ENCODE measurements at regions of chr20 and their contacts with region 1.

Region 1: DNA sequence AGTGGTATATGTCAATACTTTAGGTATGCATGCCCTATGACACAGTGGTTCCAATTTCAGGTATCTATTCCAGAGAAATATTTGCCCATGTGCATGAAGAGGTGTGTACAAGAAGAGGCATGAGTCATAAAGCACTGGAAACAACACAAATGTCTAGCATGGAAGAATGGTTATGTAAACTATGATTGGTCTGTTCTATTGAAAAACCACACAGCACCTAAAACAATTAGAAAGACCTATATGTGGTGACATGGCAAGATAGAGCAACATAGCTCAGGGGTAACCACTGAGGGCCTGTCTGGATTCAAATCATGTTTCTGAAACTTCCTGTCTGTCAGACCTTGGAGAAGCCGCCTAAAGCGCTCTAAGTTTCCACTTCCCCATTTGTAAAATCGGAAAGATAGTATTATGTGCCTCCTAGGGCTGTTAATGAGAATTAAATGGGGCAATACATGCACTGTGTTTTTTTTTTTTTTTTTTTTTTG is 76.0 kb upstream of the SHLD1 start:
- DNase-seq: peak; percentile 15
- H3K4me3 Mint-ChIP-seq: no peak overlapping the region
- H3K27ac Mint-ChIP-seq: no peak overlapping the region
- H3K4me1 Mint-ChIP-seq: peaks cover 7% of the 10 kb centered on the region
- H3K27me3 Mint-ChIP-seq: no peaks in the 10 kb centered on the region

Region 2: DNA sequence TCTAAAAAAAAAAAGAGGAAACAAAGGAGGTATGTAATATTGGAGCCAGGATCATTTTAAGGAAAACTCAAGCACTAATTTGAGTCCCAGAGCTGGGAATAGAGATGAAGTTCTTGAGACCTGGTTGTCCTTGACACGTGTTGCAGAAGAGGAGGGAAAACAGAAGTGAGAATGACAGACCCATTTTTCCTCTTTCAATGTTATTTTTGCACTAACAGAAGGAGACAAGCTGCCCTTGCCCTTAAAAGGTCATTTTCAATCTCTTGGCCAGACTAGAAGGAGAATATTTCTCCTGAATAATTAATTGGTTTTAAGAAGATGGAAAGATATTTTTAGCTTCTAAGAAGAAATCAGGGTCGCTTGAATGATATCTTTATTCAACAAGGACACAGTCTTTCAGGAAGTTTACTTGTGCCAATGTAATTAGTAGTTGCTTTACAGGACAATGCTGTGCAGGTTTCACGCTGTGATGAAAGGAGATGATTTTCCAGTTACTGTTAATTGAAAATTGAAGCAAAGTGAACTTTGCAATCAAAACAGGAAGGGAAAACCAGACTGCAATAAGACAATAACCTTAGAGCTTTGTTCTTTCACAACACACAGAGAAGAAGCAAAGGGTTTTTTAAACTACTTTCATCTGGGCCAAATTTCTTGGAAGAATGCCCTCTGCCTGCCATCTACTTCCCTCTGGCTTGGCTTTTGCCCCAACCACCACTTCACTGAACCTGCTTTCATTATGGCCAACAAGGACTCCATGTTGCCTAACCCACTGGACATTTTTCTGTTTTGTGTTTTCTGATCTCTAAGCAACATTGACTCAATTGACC is 31.9 kb before region 1 on chr20:
- CTCF ChIA-PET with region 1: no interaction called
- intact Hi-C with region 1: loop called (anchors 1 kb)
- DNase-seq: no peak
- H3K4me3 Mint-ChIP-seq: no peak overlapping the region
- H3K27ac Mint-ChIP-seq: no peak overlapping the region
- H3K4me1 Mint-ChIP-seq: peaks cover 42% of the 10 kb centered on the region
- H3K27me3 Mint-ChIP-seq: no peaks in the 10 kb centered on the region

Region 3: DNA sequence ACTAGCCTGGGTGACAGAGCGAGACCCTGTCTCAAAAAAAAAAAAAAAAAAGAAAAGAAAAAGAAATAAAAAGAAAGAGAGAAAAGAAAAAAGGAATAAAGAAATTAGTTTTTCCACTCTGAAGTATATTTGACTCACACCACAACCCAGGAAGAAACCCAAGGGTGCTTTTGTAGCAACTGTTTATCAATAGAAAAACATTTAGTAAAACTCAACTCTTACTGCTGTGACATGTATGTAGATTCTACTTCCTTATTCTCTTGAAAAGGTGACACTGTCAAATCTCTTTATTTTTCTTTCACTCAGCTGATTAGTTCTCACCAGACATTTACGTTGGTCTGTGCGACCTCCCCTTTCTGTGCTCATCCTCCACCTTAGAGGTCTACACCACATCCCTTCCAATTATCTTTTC is 23.9 kb before region 1 on chr20:
- CTCF ChIA-PET with region 1: interaction called, 10 read pairs
- intact Hi-C with region 1: loop called (anchors 1 kb)
- DNase-seq: no peak
- H3K4me3 Mint-ChIP-seq: no peak overlapping the region
- H3K27ac Mint-ChIP-seq: peak overlapping the region; percentile 33
- H3K4me1 Mint-ChIP-seq: peaks cover 42% of the 10 kb centered on the region
- H3K27me3 Mint-ChIP-seq: no peaks in the 10 kb centered on the region

Region 4: GRCh38 chr20:5658912-5659345 is 15.3 kb before region 1 on chr20:
- CTCF ChIA-PET with region 1: interaction called, 4 read pairs
- intact Hi-C with region 1: loop called (anchors 1 kb)
- DNase-seq: peak; percentile 84
- H3K4me3 Mint-ChIP-seq: no peak overlapping the region
- H3K27ac Mint-ChIP-seq: no peak overlapping the region
- H3K4me1 Mint-ChIP-seq: peaks cover 18% of the 10 kb centered on the region
- H3K27me3 Mint-ChIP-seq: no peaks in the 10 kb centered on the region

Region 5: DNA sequence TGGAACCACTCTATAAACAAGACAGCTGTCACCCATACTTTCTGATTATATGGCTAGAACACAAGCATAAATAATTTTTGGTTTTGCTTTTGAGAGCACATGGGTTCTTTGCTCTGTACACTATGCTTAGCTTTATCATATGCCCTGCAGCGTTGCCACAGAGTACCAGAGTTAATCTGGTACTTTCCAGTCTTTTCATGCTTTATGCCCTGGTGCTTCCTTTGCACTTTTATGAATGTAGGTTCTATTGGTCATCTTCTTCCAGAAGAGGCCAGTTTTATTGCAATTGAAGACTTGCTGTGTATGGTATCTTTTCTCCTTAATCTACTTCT is 96.7 kb after region 1 on chr20:
- CTCF ChIA-PET with region 1: no interaction called
- intact Hi-C with region 1: no loop called
- DNase-seq: no peak
- H3K4me3 Mint-ChIP-seq: no peak overlapping the region
- H3K27ac Mint-ChIP-seq: peak overlapping the region; percentile 30
- H3K4me1 Mint-ChIP-seq: peaks cover 18% of the 10 kb centered on the region
- H3K27me3 Mint-ChIP-seq: no peaks in the 10 kb centered on the region

Measured in activated naive CD4-positive, alpha-beta T cell treated with anti-CD3 and anti-CD28 coated beads for 36 hours (primary cell).